MCF 10A (cell line): ENCODE measurements at regions of chr1 and their contacts with region 1.

Region 1: DNA sequence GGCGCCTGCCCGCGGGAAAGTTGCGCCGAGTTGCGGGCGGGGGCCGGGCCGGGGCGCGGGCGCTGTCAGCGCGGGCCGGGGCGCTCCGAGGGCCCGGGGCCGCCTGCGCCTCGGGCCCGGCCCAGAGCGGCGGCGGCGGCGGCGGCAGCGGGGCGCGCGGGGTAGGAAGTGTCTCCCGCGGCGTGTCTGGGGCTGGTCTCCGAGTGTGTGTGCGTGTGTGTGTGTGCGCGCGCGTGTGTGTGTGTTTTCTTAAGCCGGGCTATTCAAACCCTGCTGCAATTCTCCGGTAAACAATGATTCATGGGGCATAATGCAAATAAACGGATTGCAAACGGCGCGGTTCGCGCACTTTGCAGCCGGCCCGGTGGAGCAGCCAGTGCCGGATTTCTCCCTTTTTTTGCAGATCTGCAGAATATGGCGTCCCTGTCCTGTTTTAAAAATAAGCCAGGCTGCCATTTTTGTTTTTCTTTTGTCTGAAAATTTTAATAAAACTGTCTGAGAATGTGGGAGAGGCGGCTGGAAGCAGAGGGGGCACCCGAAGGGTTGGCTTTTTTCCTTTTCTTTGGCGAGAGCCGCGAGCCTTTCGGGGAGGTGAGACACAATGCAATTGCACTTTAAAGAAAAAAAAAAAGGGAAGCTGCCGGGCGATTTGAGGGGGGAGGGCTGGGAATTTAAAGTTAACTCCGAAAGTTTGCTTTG is 558 bp downstream of the ZNF362 start:
- DNase-seq: peak; percentile 69
- H3K4me3 Mint-ChIP-seq: peak overlapping the region; percentile 93
- H3K27ac Mint-ChIP-seq: peak overlapping the region; percentile 95
- H3K4me1 Mint-ChIP-seq: peaks cover 19% of the 10 kb centered on the region
- H3K27me3 Mint-ChIP-seq: no peaks in the 10 kb centered on the region
- CTCF ChIP-seq: no peak

Region 2: GRCh38 chr1:33060579-33061083 is 196.2 kb before region 1 on chr1:
- CTCF ChIA-PET with region 1: no interaction called
- POLR2A ChIA-PET with region 1: no interaction called
- intact Hi-C with region 1: no loop called
- DNase-seq: peak; percentile 92
- H3K4me3 Mint-ChIP-seq: no peak overlapping the region
- H3K27ac Mint-ChIP-seq: no peak overlapping the region
- H3K4me1 Mint-ChIP-seq: peaks cover 2% of the 10 kb centered on the region
- H3K27me3 Mint-ChIP-seq: no peaks in the 10 kb centered on the region
- CTCF ChIP-seq: no peak

Region 3: GRCh38 chr1:33219881-33220661 is 36.8 kb before region 1 on chr1:
- CTCF ChIA-PET with region 1: interaction called, 3 read pairs
- POLR2A ChIA-PET with region 1: interaction called, 22 read pairs
- intact Hi-C with region 1: loop called (anchors 2 kb)
- DNase-seq: peak; percentile 84
- H3K4me3 Mint-ChIP-seq: no peak overlapping the region
- H3K27ac Mint-ChIP-seq: peak overlapping the region; percentile 95
- H3K4me1 Mint-ChIP-seq: peaks cover 40% of the 10 kb centered on the region
- H3K27me3 Mint-ChIP-seq: no peaks in the 10 kb centered on the region
- CTCF ChIP-seq: no peak

Region 4: DNA sequence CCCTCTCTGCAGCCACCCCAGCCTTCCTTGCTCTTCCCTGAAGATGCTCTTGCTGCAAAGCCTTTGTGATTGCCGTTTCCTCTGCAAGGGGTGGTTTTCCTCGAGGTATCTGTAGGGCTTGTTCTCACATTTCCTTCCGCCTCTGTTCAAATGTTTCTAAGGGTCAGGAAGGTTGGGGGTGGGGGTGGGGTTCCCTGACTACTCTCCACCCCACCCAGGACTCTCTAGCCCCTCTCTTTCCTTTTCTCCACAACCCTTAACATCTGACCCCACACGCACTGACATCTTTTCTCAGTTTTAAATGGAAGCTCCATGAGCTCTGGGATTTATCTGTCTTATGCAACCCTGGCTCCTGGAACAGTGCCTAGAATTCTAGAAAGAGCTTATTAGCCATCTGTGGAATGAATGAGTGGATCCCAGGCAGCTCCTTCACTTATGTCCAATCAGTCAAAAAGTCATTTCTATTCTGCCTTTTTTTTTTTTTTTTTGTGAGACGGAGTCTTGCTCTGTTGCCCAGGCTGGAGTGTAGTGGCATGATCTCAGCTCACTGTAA is 27.8 kb before region 1 on chr1:
- CTCF ChIA-PET with region 1: no interaction called
- POLR2A ChIA-PET with region 1: interaction called, 12 read pairs
- intact Hi-C with region 1: no loop called
- DNase-seq: peak; percentile 91
- H3K4me3 Mint-ChIP-seq: no peak overlapping the region
- H3K27ac Mint-ChIP-seq: no peak overlapping the region
- H3K4me1 Mint-ChIP-seq: peaks cover 8% of the 10 kb centered on the region
- H3K27me3 Mint-ChIP-seq: no peaks in the 10 kb centered on the region
- CTCF ChIP-seq: no peak